ENCODE measurements at regions of chr3 and their contacts with region 1.

Region 1: GRCh38 chr3:197224034-197224444 is 74.4 kb downstream of the DLG1 start:
- DNase-seq: peak in 5 of 9 donors; percentile 23 to 43 (median 36)
- ATAC-seq: no peak
- H3K4me3 ChIP-seq: no peak overlapping the region
- H3K4me3 Mint-ChIP-seq: no peak overlapping the region
- H3K27ac ChIP-seq: no peak overlapping the region
- H3K27ac Mint-ChIP-seq: no peak overlapping the region
- H3K4me1 ChIP-seq: no peaks in the 10 kb centered on the region
- H3K4me1 Mint-ChIP-seq: peaks cover 17 to 73% (median 45%) of the 10 kb centered on the region in 7 donors
- H3K27me3 ChIP-seq: no peaks in the 10 kb centered on the region
- H3K27me3 Mint-ChIP-seq: no peaks in the 10 kb centered on the region

Region 2: DNA sequence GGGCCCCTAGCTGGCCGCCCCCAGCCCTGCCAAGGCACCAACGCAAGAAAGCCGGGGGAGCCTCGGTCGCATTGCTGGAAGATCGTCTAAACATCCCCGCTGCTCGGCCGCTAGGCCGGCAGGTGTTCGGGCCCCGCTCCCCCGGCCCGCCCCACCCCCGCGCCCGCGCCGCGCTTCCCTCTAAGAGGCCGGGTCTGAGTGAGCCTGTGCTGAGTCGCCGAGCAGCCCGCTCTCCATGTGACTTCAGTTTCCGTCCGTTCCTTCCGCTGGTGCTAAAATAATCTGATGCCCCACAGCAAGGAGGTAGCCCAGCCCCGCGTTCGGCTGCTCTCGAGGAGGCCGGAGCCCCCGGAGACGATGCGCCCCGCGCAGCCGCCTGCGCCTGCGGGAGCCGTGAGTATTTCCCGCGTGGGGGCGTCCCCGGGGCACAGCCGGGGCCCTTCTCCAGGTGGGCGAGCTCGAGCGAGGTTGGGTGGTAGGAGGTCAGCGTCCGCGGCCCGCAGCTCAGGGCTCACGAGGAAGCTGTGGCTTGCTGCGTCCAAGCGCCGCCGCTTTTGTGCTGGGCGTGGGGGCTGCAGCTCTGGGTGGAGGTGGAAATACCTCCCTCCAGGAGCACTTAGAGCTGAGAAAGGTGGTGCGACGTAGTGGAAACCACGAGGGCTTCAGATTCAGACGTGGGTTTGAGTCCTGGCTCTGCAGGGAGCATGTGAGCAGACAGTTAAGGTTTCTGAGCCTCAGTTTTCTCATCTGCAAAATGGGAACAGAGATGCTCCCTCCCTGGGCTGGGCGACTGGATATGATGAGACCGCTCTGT is 584.3 kb before region 1 on chr3 and contains the start of gene NRROS:
- CTCF ChIA-PET with region 1: no interaction called
- POLR2A ChIA-PET with region 1: no interaction called
- intact Hi-C with region 1: no loop called
- DNase-seq: peak; percentile 25 to 71 (median 46)
- ATAC-seq: peak; percentile 70
- H3K4me3 ChIP-seq: peak within 1 kb of the TSS; percentile 75
- H3K4me3 Mint-ChIP-seq: peak within 1 kb of the TSS; percentile 75 to 94 (median 92)
- H3K27ac ChIP-seq: peak within 1 kb of the TSS; percentile 79
- H3K27ac Mint-ChIP-seq: peak within 1 kb of the TSS; percentile 74 to 95 (median 92)
- H3K4me1 ChIP-seq: peaks cover 27 to 36% of the 10 kb centered on the region in 2 donors
- H3K4me1 Mint-ChIP-seq: peaks cover 49 to 92% (median 71%) of the 10 kb centered on the region in 7 donors
- H3K27me3 ChIP-seq: no peaks in the 10 kb centered on the region
- H3K27me3 Mint-ChIP-seq: no peaks in the 10 kb centered on the region
- total RNA-seq, gene NRROS: 9.8 to 53.3 (median 14.2) TPM

Region 3: GRCh38 chr3:197456261-197457091 is 232.4 kb after region 1 on chr3:
- CTCF ChIA-PET with region 1: interaction called, 3 read pairs
- POLR2A ChIA-PET with region 1: no interaction called
- intact Hi-C with region 1: loop called in 1 of 2 experiments (anchors 1 kb)
- DNase-seq: peak in 7 of 9 donors; percentile 3 to 60 (median 23)
- ATAC-seq: peak; percentile 48
- H3K4me3 ChIP-seq: peak overlapping the region; percentile 93
- H3K4me3 Mint-ChIP-seq: peak overlapping the region; percentile 87 to 97 (median 94)
- H3K27ac ChIP-seq: peak overlapping the region; percentile 65
- H3K27ac Mint-ChIP-seq: peak overlapping the region; percentile 84 to 95 (median 91)
- H3K4me1 ChIP-seq: peaks cover 0 to 9% of the 10 kb centered on the region in 2 donors
- H3K4me1 Mint-ChIP-seq: peaks cover 13 to 34% (median 23%) of the 10 kb centered on the region in 7 donors
- H3K27me3 ChIP-seq: no peaks in the 10 kb centered on the region
- H3K27me3 Mint-ChIP-seq: peaks cover 0 to 24% (median 0%) of the 10 kb centered on the region in 5 donors

Region 4: GRCh38 chr3:197501879-197502620 is 278.0 kb after region 1 on chr3:
- CTCF ChIA-PET with region 1: no interaction called
- POLR2A ChIA-PET with region 1: no interaction called
- intact Hi-C with region 1: loop called in 1 of 2 experiments (anchors 5 kb)
- DNase-seq: peak in 5 of 9 donors; percentile 19 to 41 (median 30)
- ATAC-seq: peak; percentile 81
- H3K4me3 ChIP-seq: no peak overlapping the region
- H3K4me3 Mint-ChIP-seq: no peak overlapping the region
- H3K27ac ChIP-seq: no peak overlapping the region
- H3K27ac Mint-ChIP-seq: no peak overlapping the region
- H3K4me1 ChIP-seq: no peaks in the 10 kb centered on the region
- H3K4me1 Mint-ChIP-seq: no peaks in the 10 kb centered on the region
- H3K27me3 ChIP-seq: no peaks in the 10 kb centered on the region
- H3K27me3 Mint-ChIP-seq: no peaks in the 10 kb centered on the region

Region 5: GRCh38 chr3:197511130-197511529 is 287.1 kb after region 1 on chr3:
- CTCF ChIA-PET with region 1: interaction called, 7 read pairs
- POLR2A ChIA-PET with region 1: no interaction called
- intact Hi-C with region 1: loop called (anchors 1 kb)
- DNase-seq: no peak
- ATAC-seq: no peak
- H3K4me3 ChIP-seq: no peak overlapping the region
- H3K4me3 Mint-ChIP-seq: no peak overlapping the region
- H3K27ac ChIP-seq: no peak overlapping the region
- H3K27ac Mint-ChIP-seq: no peak overlapping the region
- H3K4me1 ChIP-seq: no peaks in the 10 kb centered on the region
- H3K4me1 Mint-ChIP-seq: peaks cover 0 to 10% (median 9%) of the 10 kb centered on the region in 7 donors
- H3K27me3 ChIP-seq: no peaks in the 10 kb centered on the region
- H3K27me3 Mint-ChIP-seq: no peaks in the 10 kb centered on the region

Measured in naive thymus-derived CD4-positive, alpha-beta T cell (primary cell).